ENCODE measurements at regions of chr16 and their contacts with region 1.

Region 1: GRCh38 chr16:11255737-11256660 is at the start of gene SOCS1:
- DNase-seq: peak; percentile 72 to 95 (median 88)
- ATAC-seq: peak; percentile 58
- H3K4me3 ChIP-seq: peak within 1 kb of the TSS; percentile 96
- H3K4me3 Mint-ChIP-seq: peak within 1 kb of the TSS; percentile 99
- H3K27ac ChIP-seq: peak within 1 kb of the TSS; percentile 83 to 86
- H3K27ac Mint-ChIP-seq: peak within 1 kb of the TSS; percentile 97
- H3K4me1 ChIP-seq: peaks cover 66% of the 10 kb centered on the region
- H3K4me1 Mint-ChIP-seq: peaks cover 56% of the 10 kb centered on the region
- H3K27me3 ChIP-seq: no peaks in the 10 kb centered on the region
- H3K27me3 Mint-ChIP-seq: no peaks in the 10 kb centered on the region
- CTCF ChIP-seq: peak; percentile 75
- total RNA-seq, gene SOCS1: 71.3 to 71.4 TPM

Region 2: GRCh38 chr16:10944249-10945064 is 311.5 kb before region 1 on chr16 and contains the start of gene CLEC16A:
- CTCF ChIA-PET with region 1: interaction called, 6 read pairs
- POLR2A ChIA-PET with region 1: interaction called, 22 read pairs
- intact Hi-C with region 1: no loop called
- DNase-seq: peak; percentile 89 to 98 (median 95)
- ATAC-seq: peak; percentile 76
- H3K4me3 ChIP-seq: peak within 1 kb of the TSS; percentile 85
- H3K4me3 Mint-ChIP-seq: peak within 1 kb of the TSS; percentile 96
- H3K27ac ChIP-seq: peak within 1 kb of the TSS in 1 of 2 donors; percentile 55
- H3K27ac Mint-ChIP-seq: peak within 1 kb of the TSS; percentile 76
- H3K4me1 ChIP-seq: peaks cover 73% of the 10 kb centered on the region
- H3K4me1 Mint-ChIP-seq: peaks cover 73% of the 10 kb centered on the region
- H3K27me3 ChIP-seq: no peaks in the 10 kb centered on the region
- H3K27me3 Mint-ChIP-seq: no peaks in the 10 kb centered on the region
- CTCF ChIP-seq: no peak
- total RNA-seq, gene CLEC16A: 21.7 to 22.7 TPM

Region 3: DNA sequence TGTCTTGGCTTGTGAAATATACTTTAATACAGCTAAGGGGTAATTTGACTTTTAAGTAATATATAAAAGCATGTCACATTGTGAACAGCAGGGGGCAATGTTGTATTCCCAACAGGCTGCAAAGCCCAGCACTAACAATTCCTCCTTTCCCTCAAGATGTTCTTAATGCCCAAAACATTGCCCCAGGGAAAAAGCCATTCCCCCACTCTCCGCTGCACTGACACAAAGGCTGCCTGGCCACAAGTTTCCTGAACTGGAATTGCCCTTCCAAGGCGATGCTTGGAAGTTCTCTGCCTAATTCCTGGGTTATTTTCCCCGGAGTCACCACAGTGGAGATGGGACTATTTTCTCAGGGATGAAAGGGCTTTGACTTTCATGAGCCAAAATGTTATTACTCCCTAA is 284.4 kb before region 1 on chr16:
- CTCF ChIA-PET with region 1: interaction called, 5 read pairs
- POLR2A ChIA-PET with region 1: interaction called, 43 read pairs
- intact Hi-C with region 1: loop called (anchors 1 kb)
- DNase-seq: peak in 8 of 14 experiments; percentile 11 to 78 (median 44)
- ATAC-seq: peak; percentile 34
- H3K4me3 ChIP-seq: no peak overlapping the region
- H3K4me3 Mint-ChIP-seq: no peak overlapping the region
- H3K27ac ChIP-seq: no peak overlapping the region
- H3K27ac Mint-ChIP-seq: no peak overlapping the region
- H3K4me1 ChIP-seq: peaks cover 10% of the 10 kb centered on the region
- H3K4me1 Mint-ChIP-seq: peaks cover 21% of the 10 kb centered on the region
- H3K27me3 ChIP-seq: no peaks in the 10 kb centered on the region
- H3K27me3 Mint-ChIP-seq: no peaks in the 10 kb centered on the region
- CTCF ChIP-seq: peak; percentile 76

Region 4: DNA sequence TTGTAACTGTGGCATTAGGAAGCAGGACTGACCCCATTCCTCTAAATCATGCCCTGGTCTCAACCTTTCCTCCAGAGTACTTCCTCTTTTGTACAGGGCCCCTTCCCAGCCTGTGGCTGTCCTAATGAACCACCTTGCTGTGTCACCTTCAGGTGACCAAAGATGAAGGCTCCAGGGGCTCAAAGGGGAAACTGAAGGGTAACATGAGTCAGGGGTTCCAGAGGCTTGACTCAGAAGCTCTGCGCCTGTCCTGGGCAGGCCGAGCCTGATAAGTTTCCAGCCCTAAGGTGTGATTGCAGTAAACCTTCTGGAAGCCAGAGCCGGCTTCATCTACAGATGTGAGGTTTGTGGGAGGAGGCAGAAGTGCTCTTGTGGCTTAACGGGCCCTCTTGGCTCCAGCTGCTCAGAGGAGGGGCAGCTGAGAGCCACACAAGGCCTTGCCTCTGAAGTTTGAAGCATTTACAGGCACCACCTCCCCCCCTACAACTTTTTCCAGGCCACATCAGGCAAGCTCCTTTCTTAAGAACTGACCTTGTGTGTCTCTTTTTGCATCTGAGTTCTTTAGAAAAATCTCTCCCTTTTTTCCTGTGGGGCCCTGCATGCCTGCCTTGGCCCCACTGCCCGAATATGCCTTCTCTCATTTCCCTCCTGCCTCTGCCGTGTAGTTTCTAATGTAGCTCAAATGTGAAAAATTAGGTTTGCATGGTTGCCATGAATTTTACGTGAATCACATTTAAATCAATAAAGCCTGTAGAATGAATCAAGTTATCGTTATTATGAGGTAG is 161.7 kb before region 1 on chr16:
- CTCF ChIA-PET with region 1: interaction called, 3 read pairs
- POLR2A ChIA-PET with region 1: interaction called, 3 read pairs
- intact Hi-C with region 1: loop called in 1 of 2 experiments (anchors 5 kb)
- DNase-seq: peak in 4 of 14 experiments; percentile 23 to 35 (median 32)
- ATAC-seq: peak; percentile 51
- H3K4me3 ChIP-seq: no peak overlapping the region
- H3K4me3 Mint-ChIP-seq: peak overlapping the region; percentile 30
- H3K27ac ChIP-seq: peak overlapping the region; percentile 47 to 49
- H3K27ac Mint-ChIP-seq: peak overlapping the region; percentile 81
- H3K4me1 ChIP-seq: peaks cover 33% of the 10 kb centered on the region
- H3K4me1 Mint-ChIP-seq: peaks cover 33% of the 10 kb centered on the region
- H3K27me3 ChIP-seq: no peaks in the 10 kb centered on the region
- H3K27me3 Mint-ChIP-seq: no peaks in the 10 kb centered on the region
- CTCF ChIP-seq: no peak

Region 5: GRCh38 chr16:11224096-11224893 is 31.7 kb before region 1 on chr16:
- CTCF ChIA-PET with region 1: interaction called, 24 read pairs
- POLR2A ChIA-PET with region 1: interaction called, 195 read pairs
- intact Hi-C with region 1: loop called (anchors 1 kb)
- DNase-seq: peak; percentile 23 to 92 (median 50)
- ATAC-seq: peak; percentile 51
- H3K4me3 ChIP-seq: peak overlapping the region; percentile 51
- H3K4me3 Mint-ChIP-seq: peak overlapping the region; percentile 84
- H3K27ac ChIP-seq: peak overlapping the region; percentile 91 to 92
- H3K27ac Mint-ChIP-seq: peak overlapping the region; percentile 99
- H3K4me1 ChIP-seq: peaks cover 46% of the 10 kb centered on the region
- H3K4me1 Mint-ChIP-seq: peaks cover 38% of the 10 kb centered on the region
- H3K27me3 ChIP-seq: no peaks in the 10 kb centered on the region
- H3K27me3 Mint-ChIP-seq: no peaks in the 10 kb centered on the region
- CTCF ChIP-seq: no peak

Region 6: DNA sequence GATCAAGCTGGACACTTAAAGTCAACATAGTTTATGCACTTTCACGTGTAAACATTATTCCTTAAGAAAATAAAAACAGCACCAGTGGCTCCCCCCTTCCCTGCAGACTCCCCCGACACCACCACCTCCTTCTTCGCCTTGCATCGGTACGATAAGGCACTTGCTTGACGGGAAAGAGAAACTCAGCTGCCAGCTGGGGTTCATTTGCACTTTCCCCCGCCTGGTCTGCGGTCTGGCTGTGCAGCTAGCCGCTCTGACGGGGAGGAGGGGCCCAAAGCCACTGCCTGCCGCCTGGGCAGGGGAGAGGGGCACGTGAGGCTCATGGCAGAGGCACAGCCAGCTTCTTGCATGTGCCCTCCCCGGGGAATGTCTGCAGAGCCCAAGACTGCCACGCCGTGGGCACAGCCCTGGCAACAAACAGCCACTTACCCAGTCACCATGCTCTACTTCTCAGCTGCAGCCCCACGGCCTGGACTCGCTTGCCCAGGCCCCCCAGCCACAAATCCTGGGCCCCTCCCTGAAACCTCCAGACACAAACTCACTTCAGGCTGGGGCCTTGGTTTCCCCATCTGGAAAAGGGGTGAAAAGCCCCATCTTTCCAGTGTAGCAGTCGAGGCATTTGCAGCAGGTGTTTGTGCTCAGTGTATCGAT is 41.6 kb after region 1 on chr16:
- CTCF ChIA-PET with region 1: interaction called, 14 read pairs
- POLR2A ChIA-PET with region 1: interaction called, 47 read pairs
- intact Hi-C with region 1: loop called in 1 of 2 experiments (anchors 5 kb)
- DNase-seq: peak; percentile 51 to 85 (median 65)
- ATAC-seq: peak; percentile 93
- H3K4me3 ChIP-seq: peak overlapping the region; percentile 42
- H3K4me3 Mint-ChIP-seq: peak overlapping the region; percentile 82
- H3K27ac ChIP-seq: no peak overlapping the region
- H3K27ac Mint-ChIP-seq: peak overlapping the region; percentile 73
- H3K4me1 ChIP-seq: peaks cover 24% of the 10 kb centered on the region
- H3K4me1 Mint-ChIP-seq: peaks cover 33% of the 10 kb centered on the region
- H3K27me3 ChIP-seq: peaks cover 0 to 3% of the 10 kb centered on the region in 2 experiments
- H3K27me3 Mint-ChIP-seq: no peaks in the 10 kb centered on the region
- CTCF ChIP-seq: peak; percentile 39

Region 7: DNA sequence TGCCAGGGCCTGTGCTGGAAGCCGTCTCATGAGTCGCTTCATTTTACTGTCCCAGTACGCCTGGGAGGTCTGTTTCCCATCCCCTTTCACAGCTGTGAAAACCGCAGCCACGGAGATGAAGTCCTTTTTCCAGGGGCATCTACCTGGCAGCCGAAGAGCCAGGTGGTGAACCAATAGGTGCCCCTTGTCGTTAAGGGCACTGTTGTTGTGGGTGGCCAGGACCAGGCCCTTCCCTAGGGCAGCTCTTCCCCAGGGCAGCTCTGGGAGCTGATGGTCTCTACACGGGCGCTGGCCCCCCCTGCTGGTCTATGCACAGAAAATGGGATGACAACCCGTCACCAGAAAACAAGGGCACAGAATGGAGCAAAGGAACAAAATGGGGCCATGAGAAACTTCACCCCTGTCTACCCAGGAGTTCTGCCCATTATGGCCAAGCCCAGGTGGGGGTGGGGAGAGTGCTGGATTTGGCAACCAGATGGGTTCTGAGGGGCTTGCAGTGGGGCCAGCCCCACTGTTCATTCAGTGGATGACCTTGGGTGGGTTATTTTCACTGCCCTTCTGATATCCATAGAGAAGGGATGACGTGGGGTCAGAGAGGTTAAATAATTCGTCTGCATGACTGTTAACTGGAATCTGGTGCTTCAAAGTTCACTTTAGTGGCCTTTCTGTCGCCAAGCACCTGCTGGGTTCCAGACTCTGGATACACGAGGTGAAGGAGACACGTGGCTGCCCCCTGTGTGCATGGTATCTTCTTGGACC is 100.8 kb after region 1 on chr16:
- CTCF ChIA-PET with region 1: interaction called, 19 read pairs
- POLR2A ChIA-PET with region 1: interaction called, 97 read pairs
- intact Hi-C with region 1: loop called in 1 of 2 experiments (anchors 2 kb)
- DNase-seq: peak in 13 of 14 experiments; percentile 33 to 76 (median 48)
- ATAC-seq: no peak
- H3K4me3 ChIP-seq: no peak overlapping the region
- H3K4me3 Mint-ChIP-seq: peak overlapping the region; percentile 42
- H3K27ac ChIP-seq: no peak overlapping the region
- H3K27ac Mint-ChIP-seq: peak overlapping the region; percentile 93
- H3K4me1 ChIP-seq: peaks cover 53% of the 10 kb centered on the region
- H3K4me1 Mint-ChIP-seq: peaks cover 76% of the 10 kb centered on the region
- H3K27me3 ChIP-seq: peaks cover 0 to 4% of the 10 kb centered on the region in 2 experiments
- H3K27me3 Mint-ChIP-seq: no peaks in the 10 kb centered on the region
- CTCF ChIP-seq: peak; percentile 61

Region 8: DNA sequence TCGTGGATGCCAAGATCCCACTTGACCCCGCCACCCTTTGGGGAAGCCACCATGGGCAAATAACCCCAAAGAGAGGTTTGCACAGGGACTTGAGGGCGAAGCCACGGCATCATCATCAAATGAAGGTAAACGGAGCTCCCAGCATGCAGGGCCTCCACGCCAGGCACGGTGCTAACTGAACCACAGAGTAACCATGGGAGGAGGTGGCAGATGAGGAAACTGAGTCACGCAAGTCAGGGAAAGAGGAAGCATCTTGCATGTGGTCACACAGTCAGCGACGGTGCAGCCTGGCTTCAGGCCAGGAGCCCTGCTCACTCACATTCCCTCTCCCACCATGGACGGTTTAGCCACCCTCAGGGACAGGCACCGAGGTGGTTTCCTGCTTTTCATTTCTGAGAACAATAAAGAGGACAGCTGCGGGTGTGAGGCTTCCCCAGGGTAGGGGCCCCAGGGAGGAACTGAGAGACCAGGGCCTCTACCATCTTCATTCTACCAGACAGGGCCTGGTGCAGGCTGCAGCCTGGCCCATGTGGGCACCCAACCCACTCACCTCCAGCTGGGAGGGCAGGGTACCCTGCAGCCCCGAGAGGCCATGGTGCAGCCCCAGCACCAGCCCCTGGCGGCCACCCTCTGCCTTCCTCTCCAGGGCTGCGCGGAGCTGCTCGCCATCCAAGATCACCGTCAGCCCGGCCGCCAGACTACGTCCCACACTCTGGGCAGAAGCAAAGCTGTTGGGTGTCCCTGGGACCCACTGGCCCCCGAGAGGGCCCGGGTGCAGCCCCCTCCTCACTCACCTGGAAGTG is 167.5 kb after region 1 on chr16:
- CTCF ChIA-PET with region 1: no interaction called
- POLR2A ChIA-PET with region 1: no interaction called
- intact Hi-C with region 1: no loop called
- DNase-seq: peak in 2 of 14 experiments; percentile 25 to 33
- ATAC-seq: no peak
- H3K4me3 ChIP-seq: no peak overlapping the region
- H3K4me3 Mint-ChIP-seq: no peak overlapping the region
- H3K27ac ChIP-seq: no peak overlapping the region
- H3K27ac Mint-ChIP-seq: no peak overlapping the region
- H3K4me1 ChIP-seq: no peaks in the 10 kb centered on the region
- H3K4me1 Mint-ChIP-seq: no peaks in the 10 kb centered on the region
- H3K27me3 ChIP-seq: no peaks in the 10 kb centered on the region
- H3K27me3 Mint-ChIP-seq: no peaks in the 10 kb centered on the region
- CTCF ChIP-seq: no peak

Region 9: GRCh38 chr16:12120217-12120981 is 864.4 kb after region 1 on chr16:
- CTCF ChIA-PET with region 1: no interaction called
- POLR2A ChIA-PET with region 1: no interaction called
- intact Hi-C with region 1: no loop called
- DNase-seq: no peak
- ATAC-seq: no peak
- H3K4me3 ChIP-seq: no peak overlapping the region
- H3K4me3 Mint-ChIP-seq: no peak overlapping the region
- H3K27ac ChIP-seq: no peak overlapping the region
- H3K27ac Mint-ChIP-seq: no peak overlapping the region
- H3K4me1 ChIP-seq: no peaks in the 10 kb centered on the region
- H3K4me1 Mint-ChIP-seq: peaks cover 37% of the 10 kb centered on the region
- H3K27me3 ChIP-seq: no peaks in the 10 kb centered on the region
- H3K27me3 Mint-ChIP-seq: no peaks in the 10 kb centered on the region
- CTCF ChIP-seq: no peak